Heart right ventricle (tissue), 16 donors: ENCODE measurements at regions of chr3 and their contacts with region 1.

Region 1: GRCh38 chr3:62159709-62160092 is 213.6 kb downstream of the FEZF2 start:
- DNase-seq: peak; percentile 64 to 86
- ATAC-seq: peak; percentile 89 to 96 (median 94)
- H3K4me3 ChIP-seq: no peak overlapping the region
- H3K27ac ChIP-seq: peak overlapping the region; percentile 64 to 94 (median 84)
- H3K4me1 ChIP-seq: peaks cover 13 to 84% (median 58%) of the 10 kb centered on the region in 9 donors
- H3K27me3 ChIP-seq: no peaks in the 10 kb centered on the region
- CTCF ChIP-seq: no peak

Region 2: GRCh38 chr3:62097121-62097520 is 62.6 kb before region 1 on chr3:
- intact Hi-C with region 1: loop called in 1 of 10 experiments (anchors 5 kb)
- DNase-seq: peak in 1 of 2 donors; percentile 40
- ATAC-seq: peak; percentile 36 to 94 (median 83)
- H3K4me3 ChIP-seq: no peak overlapping the region
- H3K27ac ChIP-seq: peak overlapping the region; percentile 41 to 84 (median 68)
- H3K4me1 ChIP-seq: peaks cover 6 to 67% (median 31%) of the 10 kb centered on the region in 9 donors
- H3K27me3 ChIP-seq: no peaks in the 10 kb centered on the region
- CTCF ChIP-seq: no peak

Region 3: DNA sequence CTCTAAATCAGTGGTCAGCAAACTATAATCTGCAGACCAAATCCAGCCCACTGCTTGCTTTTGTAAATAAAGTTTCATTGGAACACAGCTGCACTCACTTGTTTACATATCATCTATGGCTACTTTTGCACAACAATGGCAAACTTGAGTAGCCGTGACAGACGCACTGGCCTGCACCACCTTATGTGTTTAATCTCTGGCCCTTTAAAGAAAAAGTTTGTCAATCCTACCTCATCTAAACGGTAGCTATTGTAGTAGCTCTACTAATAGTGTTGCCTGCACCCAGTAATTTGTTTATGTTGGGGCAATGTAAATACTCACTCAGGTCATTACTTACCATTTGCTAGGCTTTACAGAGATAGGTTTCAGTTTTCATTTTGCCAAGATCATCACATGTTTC is 15.7 kb before region 1 on chr3:
- intact Hi-C with region 1: no loop called
- DNase-seq: no peak
- ATAC-seq: peak in 3 of 8 donors; percentile 9 to 27 (median 13)
- H3K4me3 ChIP-seq: no peak overlapping the region
- H3K27ac ChIP-seq: peak overlapping the region in 5 of 10 donors; percentile 6 to 79 (median 56)
- H3K4me1 ChIP-seq: peaks cover 0 to 52% (median 17%) of the 10 kb centered on the region in 9 donors
- H3K27me3 ChIP-seq: no peaks in the 10 kb centered on the region
- CTCF ChIP-seq: no peak

Region 4: DNA sequence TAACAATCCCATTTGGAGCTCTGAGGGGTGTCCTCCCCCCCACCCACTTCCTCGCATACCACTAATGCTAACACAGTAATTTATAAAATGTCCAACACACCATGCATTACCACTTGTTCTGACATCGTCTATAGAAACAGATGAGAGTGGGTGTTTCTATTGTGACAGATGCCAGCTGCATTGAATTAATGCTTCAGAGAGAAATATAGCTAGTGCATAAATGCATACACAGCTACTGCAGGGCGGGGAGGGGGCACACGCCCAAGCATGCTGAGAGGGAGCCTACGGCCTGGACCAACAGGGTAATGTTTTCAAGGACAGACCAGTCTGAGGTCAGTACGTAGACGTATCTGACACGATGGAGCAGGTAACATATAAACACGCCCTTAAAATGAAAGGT is 319.6 kb after region 1 on chr3:
- intact Hi-C with region 1: no loop called
- DNase-seq: no peak
- ATAC-seq: no peak
- H3K4me3 ChIP-seq: no peak overlapping the region
- H3K27ac ChIP-seq: no peak overlapping the region
- H3K4me1 ChIP-seq: no peaks in the 10 kb centered on the region
- H3K27me3 ChIP-seq: peaks cover 0 to 5% (median 0%) of the 10 kb centered on the region in 7 donors
- CTCF ChIP-seq: no peak